A549 (cell line): ENCODE measurements at regions of chr10 and their contacts with region 1.

Region 1: GRCh38 chr10:6364893-6365292 is 162.2 kb downstream of the PFKFB3 start:
- DNase-seq: no peak
- ATAC-seq: peak in 1 of 2 experiments; percentile 47; a peak in 2 of 6 replicates
- H3K4me3 ChIP-seq: no peak overlapping the region
- H3K27ac ChIP-seq: peak overlapping the region; percentile 47 to 64
- H3K4me1 ChIP-seq: peaks cover 15% of the 10 kb centered on the region
- CTCF ChIP-seq: no peak
- EP300 ChIP-seq: no peak
- POLR2A ChIP-seq: no peak
- RAD21 ChIP-seq: no peak

Region 2: GRCh38 chr10:6382081-6382480 is 17.2 kb after region 1 on chr10:
- CTCF ChIA-PET with region 1: interaction called, 11 read pairs
- POLR2A ChIA-PET with region 1: no interaction called
- DNase-seq: no peak
- ATAC-seq: no peak
- H3K4me3 ChIP-seq: no peak overlapping the region
- H3K27ac ChIP-seq: peak overlapping the region in 1 of 2 experiments; percentile 44; a peak in 1 of 6 replicates
- H3K4me1 ChIP-seq: peaks cover 19% of the 10 kb centered on the region; the same call in 2 of the 3 replicates
- CTCF ChIP-seq: no peak
- EP300 ChIP-seq: no peak
- POLR2A ChIP-seq: no peak
- RAD21 ChIP-seq: no peak